ENCODE measurements at regions of chr22 and their contacts with region 1.

Region 1: DNA sequence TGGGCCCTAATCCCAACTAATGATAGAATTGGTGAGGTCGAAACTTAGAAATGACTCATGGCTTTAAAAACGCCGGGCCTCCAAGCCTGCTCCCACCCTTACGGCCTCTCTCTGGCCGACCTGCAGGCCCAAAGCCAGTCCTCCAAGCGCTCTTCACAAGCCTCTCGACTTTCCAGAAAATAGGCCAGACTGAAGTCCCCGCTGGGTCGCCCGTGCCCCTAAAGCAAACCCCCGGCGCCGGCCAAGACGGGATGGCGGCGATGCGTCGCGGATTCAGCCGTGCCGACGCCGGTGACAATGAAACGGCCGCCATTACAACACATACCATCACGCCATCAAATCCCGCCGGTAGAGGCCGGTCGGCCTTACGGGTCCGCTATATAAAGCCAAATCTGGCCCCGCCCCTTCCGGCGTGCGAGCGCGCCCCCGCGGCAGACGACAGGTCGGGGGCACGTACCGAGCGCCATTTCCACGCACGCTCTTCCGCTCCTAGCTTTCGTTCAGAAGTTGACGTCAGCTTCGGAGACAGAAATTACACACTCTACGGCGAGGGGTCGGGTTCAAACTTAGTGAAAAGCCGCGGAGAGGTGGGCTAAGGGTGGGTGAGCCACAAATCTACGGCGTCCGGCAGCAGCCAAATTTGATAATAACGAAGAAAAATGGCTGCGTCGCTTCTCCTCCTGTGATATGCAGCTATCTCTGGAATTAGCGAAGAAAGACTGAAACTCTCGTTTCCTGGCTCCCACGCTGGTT is at the start of gene RPL3:
- DNase-seq: peak; percentile 90 to 99
- H3K4me3 ChIP-seq: peak within 1 kb of the TSS; percentile 95 to 99 (median 98)
- H3K27ac ChIP-seq: peak within 1 kb of the TSS; percentile 97
- H3K4me1 ChIP-seq: peaks cover 0 to 15% (median 3%) of the 10 kb centered on the region in 4 experiments; a peak in 6 of 7 replicates
- H3K27me3 ChIP-seq: no peaks in the 10 kb centered on the region
- CTCF ChIP-seq: peak in 2 of 3 experiments; percentile 5 to 12; a peak in 3 of 4 replicates
- EP300 ChIP-seq: peak in 1 of 2 experiments; percentile 46; a peak in 1 of 3 replicates
- POLR2A ChIP-seq: peak; percentile 99 to 100
- RAD21 ChIP-seq: no peak
- total RNA-seq, gene RPL3: 2,801 and 2,865 TPM in 2 replicates

Region 2: GRCh38 chr22:39205338-39206021 is 114.0 kb before region 1 on chr22:
- CTCF ChIA-PET with region 1: interaction called, 5 read pairs
- POLR2A ChIA-PET with region 1: interaction called, 28 read pairs
- DNase-seq: no peak
- H3K4me3 ChIP-seq: no peak overlapping the region
- H3K27ac ChIP-seq: no peak overlapping the region
- H3K4me1 ChIP-seq: peaks cover 0 to 9% (median 4%) of the 10 kb centered on the region in 4 experiments; a peak in 5 of 7 replicates
- H3K27me3 ChIP-seq: no peaks in the 10 kb centered on the region
- CTCF ChIP-seq: no peak
- EP300 ChIP-seq: no peak
- POLR2A ChIP-seq: no peak
- RAD21 ChIP-seq: no peak

Region 3: DNA sequence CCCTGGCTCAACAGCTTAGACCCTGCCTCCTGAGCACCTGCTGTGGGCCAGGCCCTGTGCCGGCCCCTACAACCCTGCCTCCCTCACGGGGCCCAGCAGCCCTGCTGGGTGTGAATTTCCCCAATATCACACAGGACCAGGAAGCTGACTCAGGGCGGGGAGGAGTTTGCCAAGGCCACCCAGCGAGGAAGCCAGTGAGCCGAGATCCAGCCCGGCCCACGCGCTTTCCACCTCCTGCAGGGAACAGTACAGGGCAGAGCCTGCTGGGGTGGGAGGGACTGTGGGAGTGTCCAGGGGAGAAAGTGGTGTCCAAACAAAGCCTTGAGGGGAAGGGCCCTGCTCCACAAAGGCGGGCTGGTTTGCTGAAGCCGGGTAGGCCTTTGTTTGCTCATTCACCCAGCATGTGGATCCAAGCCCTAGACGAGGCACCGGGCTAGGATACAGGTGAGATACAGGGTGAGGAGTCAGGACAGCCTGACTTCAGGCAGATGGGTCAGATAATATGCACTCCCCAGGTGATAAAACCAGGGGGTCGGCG is 26.8 kb before region 1 on chr22:
- CTCF ChIA-PET with region 1: interaction called, 13 read pairs
- POLR2A ChIA-PET with region 1: interaction called, 692 read pairs
- DNase-seq: peak in 1 of 2 experiments; percentile 62
- H3K4me3 ChIP-seq: no peak overlapping the region
- H3K27ac ChIP-seq: no peak overlapping the region
- H3K4me1 ChIP-seq: peaks cover 0 to 16% (median 7%) of the 10 kb centered on the region in 4 experiments; a peak in 6 of 7 replicates
- H3K27me3 ChIP-seq: no peaks in the 10 kb centered on the region; a peak in 1 of 7 replicates
- CTCF ChIP-seq: no peak
- EP300 ChIP-seq: no peak
- POLR2A ChIP-seq: no peak
- RAD21 ChIP-seq: no peak

Region 4: DNA sequence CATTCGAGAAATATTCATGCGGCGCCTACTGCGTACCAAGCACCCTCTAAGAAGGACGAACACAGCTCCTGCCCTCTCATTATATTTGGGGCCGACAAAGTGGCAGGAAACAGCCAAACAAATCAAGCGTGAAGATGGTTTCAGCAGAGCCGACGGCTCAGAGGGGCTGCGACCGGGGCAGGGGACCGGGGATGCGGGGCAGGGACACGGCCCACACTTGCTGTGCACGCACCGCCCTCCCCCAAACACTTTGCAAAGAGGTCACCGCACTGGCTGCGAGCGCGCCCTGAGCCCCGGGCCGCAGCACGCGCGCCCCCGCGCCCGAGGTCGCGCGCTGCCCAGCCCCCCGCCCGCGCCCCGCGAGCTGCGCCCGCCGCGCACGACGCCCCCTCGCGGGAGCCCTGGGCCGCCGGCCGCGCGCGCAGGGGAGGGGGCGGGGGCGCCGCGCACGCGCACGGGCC is 30.1 kb after region 1 on chr22:
- CTCF ChIA-PET with region 1: interaction called, 6 read pairs
- POLR2A ChIA-PET with region 1: interaction called, 472 read pairs
- DNase-seq: peak in 1 of 2 experiments; percentile 70
- H3K4me3 ChIP-seq: peak overlapping the region; percentile 70 to 93 (median 74)
- H3K27ac ChIP-seq: no peak overlapping the region
- H3K4me1 ChIP-seq: peaks cover 5 to 29% (median 19%) of the 10 kb centered on the region in 4 experiments
- H3K27me3 ChIP-seq: peaks cover 0 to 4% (median 4%) of the 10 kb centered on the region in 4 experiments; a peak in 2 of 7 replicates
- CTCF ChIP-seq: peak in 1 of 3 experiments; percentile 9; a peak in 1 of 4 replicates
- EP300 ChIP-seq: no peak
- POLR2A ChIP-seq: no peak
- RAD21 ChIP-seq: no peak

Region 5: DNA sequence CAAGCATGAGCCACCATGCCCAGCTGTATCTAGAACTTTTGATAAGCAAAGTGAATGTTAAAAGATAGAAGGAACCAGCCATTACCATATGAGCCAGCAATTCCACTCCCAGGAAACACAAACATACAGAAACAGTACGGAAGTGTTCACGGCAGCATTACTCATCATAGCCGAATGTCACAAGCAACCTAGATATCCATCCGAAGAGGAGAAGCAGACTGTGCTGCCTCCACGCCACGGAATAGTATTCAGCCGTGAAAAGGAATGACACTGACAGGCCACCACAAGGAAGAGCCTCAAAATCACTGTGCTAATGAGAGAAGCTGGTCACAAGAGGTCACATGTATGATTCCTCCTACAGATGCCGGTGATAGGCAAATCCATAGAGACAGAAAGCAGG is 119.7 kb after region 1 on chr22:
- CTCF ChIA-PET with region 1: interaction called, 3 read pairs
- POLR2A ChIA-PET with region 1: interaction called, 35 read pairs
- DNase-seq: no peak
- H3K4me3 ChIP-seq: no peak overlapping the region
- H3K27ac ChIP-seq: no peak overlapping the region
- H3K4me1 ChIP-seq: peaks cover 0 to 8% (median 6%) of the 10 kb centered on the region in 4 experiments; a peak in 3 of 7 replicates
- H3K27me3 ChIP-seq: peaks cover 0 to 3% (median 1%) of the 10 kb centered on the region in 4 experiments; a peak in 2 of 7 replicates
- CTCF ChIP-seq: no peak
- EP300 ChIP-seq: no peak
- POLR2A ChIP-seq: no peak
- RAD21 ChIP-seq: no peak

Region 6: DNA sequence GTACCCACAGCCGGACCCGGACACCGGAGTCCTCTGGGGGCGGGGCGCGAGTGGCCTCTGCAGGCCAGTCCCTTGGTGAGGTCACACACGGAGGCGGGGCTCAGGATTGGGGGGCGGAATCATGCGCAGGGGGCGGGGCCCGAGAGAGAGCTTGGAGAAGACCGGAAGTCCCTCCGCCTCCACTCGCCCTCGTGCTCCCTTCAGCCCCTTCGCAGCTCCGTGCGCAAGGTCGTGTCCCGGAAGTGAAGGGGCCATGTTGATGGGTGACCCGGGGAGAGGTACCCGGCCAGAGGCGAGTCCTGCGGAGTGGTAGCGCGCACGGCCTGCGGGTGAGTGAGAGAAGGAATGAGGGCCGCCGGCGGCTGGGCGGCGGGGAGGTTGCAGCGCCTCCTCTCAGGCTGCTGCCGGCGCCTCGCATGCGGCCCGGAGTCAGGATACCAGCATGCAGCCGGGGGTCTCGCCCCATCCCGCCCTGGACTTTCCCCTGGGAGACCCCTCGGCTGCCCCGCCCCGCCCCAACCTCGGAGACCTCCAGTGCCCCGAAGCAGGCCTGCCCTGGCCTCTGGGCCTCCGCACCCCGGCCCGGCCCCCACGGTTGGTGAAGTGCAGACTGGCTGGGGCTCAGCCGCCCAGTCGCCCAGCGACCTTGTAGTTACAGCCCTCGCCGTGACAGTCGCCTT is 182.8 kb after region 1 on chr22 and contains the start of gene MIEF1:
- CTCF ChIA-PET with region 1: interaction called, 4 read pairs
- POLR2A ChIA-PET with region 1: interaction called, 11 read pairs
- DNase-seq: peak; percentile 88 to 99
- H3K4me3 ChIP-seq: peak within 1 kb of the TSS; percentile 68 to 88 (median 80)
- H3K27ac ChIP-seq: no peak within 1 kb of the TSS
- H3K4me1 ChIP-seq: peaks cover 3 to 9% (median 4%) of the 10 kb centered on the region in 4 experiments; a peak in 6 of 7 replicates
- H3K27me3 ChIP-seq: peaks cover 0 to 56% (median 36%) of the 10 kb centered on the region in 4 experiments; a peak in 6 of 7 replicates
- CTCF ChIP-seq: no peak
- EP300 ChIP-seq: no peak
- POLR2A ChIP-seq: peak in 1 of 2 experiments; percentile 78; a peak in 2 of 3 replicates
- RAD21 ChIP-seq: no peak
- total RNA-seq, gene MIEF1: 31.4 and 32.7 TPM in 2 replicates

Region 7: DNA sequence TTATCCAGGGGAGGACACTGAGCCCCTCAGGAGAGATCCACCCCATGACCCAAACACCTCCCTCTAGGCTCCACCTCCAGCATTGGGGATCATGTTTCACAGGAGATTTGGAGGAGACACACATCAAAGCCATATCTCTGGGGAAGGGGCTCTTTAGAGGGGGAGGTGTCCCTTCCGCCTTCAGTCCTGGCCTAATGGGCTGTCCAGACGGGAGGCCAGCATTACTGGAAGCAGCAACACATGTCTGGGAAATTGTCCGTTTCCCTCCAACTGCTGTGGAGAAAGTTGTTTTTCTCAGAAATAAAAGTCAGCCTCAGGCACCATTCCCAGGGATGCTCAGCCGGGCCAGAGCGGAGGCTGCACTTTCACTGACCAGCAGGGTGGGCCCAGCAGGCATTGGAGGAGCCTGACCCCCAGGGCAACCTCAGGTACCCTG is 260.6 kb after region 1 on chr22:
- CTCF ChIA-PET with region 1: no interaction called
- POLR2A ChIA-PET with region 1: no interaction called
- DNase-seq: no peak
- H3K4me3 ChIP-seq: no peak overlapping the region
- H3K27ac ChIP-seq: no peak overlapping the region
- H3K4me1 ChIP-seq: peaks cover 0 to 6% (median 2%) of the 10 kb centered on the region in 4 experiments; a peak in 2 of 7 replicates
- H3K27me3 ChIP-seq: peaks cover 0 to 2% (median 0%) of the 10 kb centered on the region in 4 experiments; a peak in 1 of 7 replicates
- CTCF ChIP-seq: no peak
- EP300 ChIP-seq: no peak
- POLR2A ChIP-seq: no peak
- RAD21 ChIP-seq: no peak